ENCODE measurements at regions of chr2 and their contacts with region 1.

Region 1: DNA sequence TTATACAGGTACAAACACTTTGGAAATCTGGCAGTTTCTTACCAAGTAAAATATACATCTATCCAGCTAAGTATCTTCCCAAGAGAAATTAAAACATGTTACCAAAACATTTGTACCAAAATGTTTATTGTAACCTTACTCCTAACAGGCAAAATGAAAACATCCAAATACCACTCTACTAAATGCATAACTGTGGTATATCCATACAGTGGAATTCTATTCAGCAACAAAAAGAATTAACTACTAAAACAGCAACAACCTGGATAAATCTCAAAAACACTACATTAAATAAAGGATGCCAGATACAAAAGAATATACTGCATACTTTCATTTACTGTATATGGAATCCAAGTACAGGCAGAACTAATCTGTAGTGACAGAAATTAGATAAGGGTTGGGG is 51.1 kb downstream of the TLK1 start:
- DNase-seq: no peak
- ATAC-seq: no peak
- H3K4me3 ChIP-seq: no peak overlapping the region
- H3K4me3 Mint-ChIP-seq: peak overlapping the region in 2 of 10 donors; percentile 1 to 10
- H3K27ac ChIP-seq: no peak overlapping the region
- H3K27ac Mint-ChIP-seq: peak overlapping the region in 6 of 9 donors; percentile 22 to 75 (median 41)
- H3K4me1 ChIP-seq: no peaks in the 10 kb centered on the region
- H3K4me1 Mint-ChIP-seq: peaks cover 11 to 79% (median 71%) of the 10 kb centered on the region in 7 donors
- H3K27me3 ChIP-seq: no peaks in the 10 kb centered on the region
- H3K27me3 Mint-ChIP-seq: no peaks in the 10 kb centered on the region

Region 2: DNA sequence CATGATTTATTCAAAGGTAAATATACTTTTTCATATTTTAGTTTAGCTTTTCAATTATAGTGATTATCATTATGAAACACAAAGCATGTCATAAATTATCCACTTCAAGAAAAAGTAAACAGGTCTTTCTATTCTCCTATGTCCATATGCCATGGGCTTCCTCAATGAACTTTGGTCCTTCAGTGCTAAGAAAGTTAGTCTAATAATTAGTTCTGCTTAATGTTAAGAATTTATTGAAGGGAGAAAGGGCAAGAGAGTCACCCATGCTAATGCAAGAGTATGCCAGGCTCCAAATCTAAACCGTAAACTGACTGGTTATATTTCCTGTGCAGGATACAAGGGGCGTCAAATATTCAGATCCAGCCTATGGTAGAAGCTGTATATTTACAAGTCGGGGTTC is 84.4 kb before region 1 on chr2:
- CTCF ChIA-PET with region 1: no interaction called
- POLR2A ChIA-PET with region 1: no interaction called
- intact Hi-C with region 1: no loop called
- DNase-seq: no peak
- ATAC-seq: no peak
- H3K4me3 ChIP-seq: no peak overlapping the region
- H3K4me3 Mint-ChIP-seq: no peak overlapping the region
- H3K27ac ChIP-seq: no peak overlapping the region
- H3K27ac Mint-ChIP-seq: peak overlapping the region in 1 of 9 donors; percentile 59
- H3K4me1 ChIP-seq: no peaks in the 10 kb centered on the region
- H3K4me1 Mint-ChIP-seq: peaks cover 5 to 46% (median 27%) of the 10 kb centered on the region in 7 donors
- H3K27me3 ChIP-seq: no peaks in the 10 kb centered on the region
- H3K27me3 Mint-ChIP-seq: no peaks in the 10 kb centered on the region

Region 3: GRCh38 chr2:171141320-171141719 is 31.7 kb after region 1 on chr2:
- CTCF ChIA-PET with region 1: no interaction called
- POLR2A ChIA-PET with region 1: no interaction called
- intact Hi-C with region 1: loop called in 1 of 2 experiments (anchors 5 kb)
- DNase-seq: no peak
- ATAC-seq: peak; percentile 31
- H3K4me3 ChIP-seq: no peak overlapping the region
- H3K4me3 Mint-ChIP-seq: peak overlapping the region in 7 of 10 donors; percentile 3 to 61 (median 27)
- H3K27ac ChIP-seq: no peak overlapping the region
- H3K27ac Mint-ChIP-seq: peak overlapping the region in 2 of 9 donors; percentile 1 to 86
- H3K4me1 ChIP-seq: peaks cover 9 to 20% of the 10 kb centered on the region in 2 donors
- H3K4me1 Mint-ChIP-seq: peaks cover 37 to 97% (median 75%) of the 10 kb centered on the region in 7 donors
- H3K27me3 ChIP-seq: no peaks in the 10 kb centered on the region
- H3K27me3 Mint-ChIP-seq: no peaks in the 10 kb centered on the region

Region 4: GRCh38 chr2:171173089-171173488 is 63.5 kb after region 1 on chr2:
- CTCF ChIA-PET with region 1: no interaction called
- POLR2A ChIA-PET with region 1: no interaction called
- intact Hi-C with region 1: no loop called
- DNase-seq: no peak
- ATAC-seq: no peak
- H3K4me3 ChIP-seq: no peak overlapping the region
- H3K4me3 Mint-ChIP-seq: no peak overlapping the region
- H3K27ac ChIP-seq: no peak overlapping the region
- H3K27ac Mint-ChIP-seq: peak overlapping the region in 1 of 9 donors; percentile 42
- H3K4me1 ChIP-seq: no peaks in the 10 kb centered on the region
- H3K4me1 Mint-ChIP-seq: peaks cover 0 to 10% (median 0%) of the 10 kb centered on the region in 7 donors
- H3K27me3 ChIP-seq: no peaks in the 10 kb centered on the region
- H3K27me3 Mint-ChIP-seq: peaks cover 0 to 2% (median 0%) of the 10 kb centered on the region in 5 donors